ENCODE measurements at regions of chr11 and their contacts with region 1.

Region 1: GRCh38 chr11:108048269-108048668 is 39.6 kb downstream of the CUL5 start:
- DNase-seq: no peak
- ATAC-seq: no peak
- H3K4me3 ChIP-seq: no peak overlapping the region
- H3K4me3 Mint-ChIP-seq: no peak overlapping the region
- H3K27ac ChIP-seq: no peak overlapping the region
- H3K27ac Mint-ChIP-seq: peak overlapping the region; percentile 57
- H3K4me1 ChIP-seq: no peaks in the 10 kb centered on the region
- H3K4me1 Mint-ChIP-seq: peaks cover 9% of the 10 kb centered on the region
- H3K27me3 ChIP-seq: no peaks in the 10 kb centered on the region
- H3K27me3 Mint-ChIP-seq: no peaks in the 10 kb centered on the region
- CTCF ChIP-seq: no peak

Region 2: DNA sequence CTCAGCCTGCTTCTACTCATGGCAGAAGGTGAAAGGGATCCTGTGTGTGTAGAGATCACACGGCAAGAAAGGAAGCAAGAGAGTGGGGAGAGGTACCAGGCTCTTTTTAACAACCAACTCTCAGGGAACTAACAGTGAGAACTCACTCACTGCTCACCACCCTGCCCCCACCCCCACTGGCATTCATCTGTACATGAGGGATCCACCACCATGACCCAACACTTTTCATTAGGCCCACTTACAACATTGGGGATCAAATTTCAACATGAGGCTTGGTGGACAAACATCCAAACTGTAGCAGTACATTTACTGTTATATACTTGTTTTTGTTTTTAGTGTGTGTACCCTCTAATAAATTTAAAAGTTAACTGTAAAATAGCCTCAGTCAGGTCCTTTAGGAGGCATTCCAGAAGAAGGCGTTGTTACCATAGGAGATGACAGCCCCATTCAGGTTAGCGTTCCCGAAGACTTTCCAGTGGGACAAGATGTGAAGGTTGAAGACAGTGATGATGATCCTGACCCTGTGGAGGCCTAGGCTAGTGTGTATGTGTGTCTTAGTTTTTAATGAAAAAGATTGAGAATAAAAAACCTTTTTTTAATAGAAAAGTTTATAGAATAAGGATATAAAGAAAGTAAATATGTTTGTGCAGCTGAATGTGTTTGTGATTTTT is 28.3 kb before region 1 on chr11:
- CTCF ChIA-PET with region 1: no interaction called
- POLR2A ChIA-PET with region 1: interaction called, 3 read pairs
- intact Hi-C with region 1: loop called in 1 of 2 experiments (anchors 1 kb)
- DNase-seq: no peak
- ATAC-seq: no peak
- H3K4me3 ChIP-seq: no peak overlapping the region
- H3K4me3 Mint-ChIP-seq: no peak overlapping the region
- H3K27ac ChIP-seq: no peak overlapping the region
- H3K27ac Mint-ChIP-seq: no peak overlapping the region
- H3K4me1 ChIP-seq: peaks cover 22% of the 10 kb centered on the region
- H3K4me1 Mint-ChIP-seq: peaks cover 93% of the 10 kb centered on the region
- H3K27me3 ChIP-seq: no peaks in the 10 kb centered on the region
- H3K27me3 Mint-ChIP-seq: no peaks in the 10 kb centered on the region
- CTCF ChIP-seq: no peak

Measured in CD4-positive, alpha-beta T cell (primary cell).